Transverse colon (tissue), 4 donors: ENCODE measurements at regions of chr6 and their contacts with region 1.

Region 1: DNA sequence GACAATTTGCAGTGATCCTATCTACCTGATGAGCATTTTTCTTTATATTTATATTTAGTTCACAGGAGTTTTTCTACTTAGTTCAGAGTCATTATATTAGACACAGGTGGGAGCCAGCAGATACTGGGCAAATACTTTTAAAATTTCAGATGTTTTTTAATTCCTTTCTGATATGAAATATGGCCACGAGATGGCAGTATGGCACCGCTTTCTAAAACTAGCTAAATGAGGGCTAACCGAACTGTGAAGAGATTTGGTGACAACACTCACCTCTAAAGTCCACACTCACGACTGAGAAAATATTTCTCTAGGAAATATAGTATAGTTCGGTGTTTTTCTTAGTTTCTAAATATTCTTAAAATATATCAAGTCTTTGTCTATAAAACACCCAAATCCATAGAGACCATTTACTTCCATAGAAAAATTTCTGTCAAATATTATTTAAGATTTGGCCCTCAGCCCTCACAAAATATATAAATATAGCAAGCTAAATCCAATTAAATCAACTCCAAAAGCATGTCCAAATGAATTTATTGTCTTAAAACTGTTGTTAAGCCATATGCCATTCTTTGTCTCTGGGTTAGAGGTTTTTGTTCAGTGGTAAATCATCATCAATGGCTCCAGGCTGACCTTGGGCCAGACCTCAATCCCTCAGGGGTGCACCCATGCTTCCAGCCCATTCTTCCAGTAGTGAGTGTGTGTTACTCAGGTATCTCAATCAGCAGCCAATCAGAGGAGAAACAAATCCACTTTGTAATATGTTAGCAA is 63.6 kb downstream of the HUS1B start:
- DNase-seq: peak; percentile 57
- H3K4me3 ChIP-seq: no peak overlapping the region
- H3K27ac ChIP-seq: peak overlapping the region; percentile 13 to 64 (median 44)
- H3K4me1 ChIP-seq: peaks cover 0 to 3% (median 0%) of the 10 kb centered on the region in 4 donors
- H3K27me3 ChIP-seq: no peaks in the 10 kb centered on the region
- CTCF ChIP-seq: peak; percentile 68 to 81 (median 73)
- EP300 ChIP-seq: no peak
- POLR2A ChIP-seq: no peak

Region 2: DNA sequence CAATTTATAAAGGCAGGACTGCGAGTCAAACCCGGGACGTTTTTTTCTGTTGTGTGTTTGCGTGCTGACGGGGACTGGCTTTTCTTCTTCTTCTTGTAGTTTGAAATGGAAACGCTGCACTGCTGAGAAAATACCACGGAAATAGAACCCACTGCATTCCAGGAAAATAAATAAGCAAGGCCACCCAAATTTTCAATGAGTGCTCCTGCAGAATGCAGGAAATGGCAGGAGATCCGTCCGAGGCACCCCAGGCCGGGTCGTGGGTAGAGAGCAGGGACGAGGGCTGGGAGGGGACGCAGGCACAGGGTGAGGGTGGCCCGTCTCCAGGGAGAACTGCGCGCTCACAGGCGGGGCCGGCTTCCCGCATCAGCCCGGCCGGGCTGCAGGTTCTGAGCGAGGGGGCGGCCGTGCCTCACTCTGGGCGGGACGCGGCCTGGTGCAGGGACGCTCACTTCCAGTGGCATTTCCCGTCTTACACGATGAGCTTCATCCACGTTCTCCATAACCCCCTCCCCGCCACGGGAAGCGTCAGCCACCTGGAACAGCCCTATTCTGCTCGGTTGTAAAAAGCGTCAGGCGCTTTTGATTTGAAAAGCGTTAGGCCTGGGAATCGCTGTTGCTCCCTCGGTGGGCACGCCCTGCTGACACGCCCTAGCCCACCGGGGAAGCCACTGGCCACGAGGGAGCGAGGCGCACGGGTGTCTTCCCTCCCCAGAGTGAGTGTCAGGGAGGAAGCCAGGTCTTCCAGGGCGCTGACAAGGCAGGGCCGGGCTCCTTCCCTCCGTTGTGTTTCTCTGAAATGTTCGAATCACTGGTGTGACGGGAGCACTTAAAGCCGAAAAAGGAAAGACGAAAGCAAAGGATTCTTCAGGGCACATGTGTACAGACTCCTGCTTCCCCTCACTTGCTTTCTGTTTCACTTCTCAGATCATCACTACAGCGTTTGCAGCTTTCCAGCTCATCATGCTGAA is 117.6 kb after region 1 on chr6:
- in situ Hi-C with region 1: no loop called
- intact Hi-C with region 1: loop called (anchors 10 kb)
- DNase-seq: peak; percentile 60
- H3K4me3 ChIP-seq: peak overlapping the region; percentile 34 to 57 (median 43)
- H3K27ac ChIP-seq: peak overlapping the region; percentile 85 to 92 (median 90)
- H3K4me1 ChIP-seq: peaks cover 0 to 16% (median 2%) of the 10 kb centered on the region in 4 donors
- H3K27me3 ChIP-seq: peaks cover 31% of the 10 kb centered on the region
- CTCF ChIP-seq: no peak
- EP300 ChIP-seq: no peak
- POLR2A ChIP-seq: peak; percentile 59

Region 3: GRCh38 chr6:786946-787763 is 193.8 kb after region 1 on chr6:
- in situ Hi-C with region 1: loop called in 2 of 4 experiments (anchors 10 to 25 kb)
- intact Hi-C with region 1: loop called (anchors 10 kb)
- DNase-seq: no peak
- H3K4me3 ChIP-seq: no peak overlapping the region
- H3K27ac ChIP-seq: no peak overlapping the region
- H3K4me1 ChIP-seq: no peaks in the 10 kb centered on the region
- H3K27me3 ChIP-seq: peaks cover 15% of the 10 kb centered on the region
- CTCF ChIP-seq: peak; percentile 48 to 67 (median 59)
- EP300 ChIP-seq: no peak
- POLR2A ChIP-seq: no peak

Region 4: DNA sequence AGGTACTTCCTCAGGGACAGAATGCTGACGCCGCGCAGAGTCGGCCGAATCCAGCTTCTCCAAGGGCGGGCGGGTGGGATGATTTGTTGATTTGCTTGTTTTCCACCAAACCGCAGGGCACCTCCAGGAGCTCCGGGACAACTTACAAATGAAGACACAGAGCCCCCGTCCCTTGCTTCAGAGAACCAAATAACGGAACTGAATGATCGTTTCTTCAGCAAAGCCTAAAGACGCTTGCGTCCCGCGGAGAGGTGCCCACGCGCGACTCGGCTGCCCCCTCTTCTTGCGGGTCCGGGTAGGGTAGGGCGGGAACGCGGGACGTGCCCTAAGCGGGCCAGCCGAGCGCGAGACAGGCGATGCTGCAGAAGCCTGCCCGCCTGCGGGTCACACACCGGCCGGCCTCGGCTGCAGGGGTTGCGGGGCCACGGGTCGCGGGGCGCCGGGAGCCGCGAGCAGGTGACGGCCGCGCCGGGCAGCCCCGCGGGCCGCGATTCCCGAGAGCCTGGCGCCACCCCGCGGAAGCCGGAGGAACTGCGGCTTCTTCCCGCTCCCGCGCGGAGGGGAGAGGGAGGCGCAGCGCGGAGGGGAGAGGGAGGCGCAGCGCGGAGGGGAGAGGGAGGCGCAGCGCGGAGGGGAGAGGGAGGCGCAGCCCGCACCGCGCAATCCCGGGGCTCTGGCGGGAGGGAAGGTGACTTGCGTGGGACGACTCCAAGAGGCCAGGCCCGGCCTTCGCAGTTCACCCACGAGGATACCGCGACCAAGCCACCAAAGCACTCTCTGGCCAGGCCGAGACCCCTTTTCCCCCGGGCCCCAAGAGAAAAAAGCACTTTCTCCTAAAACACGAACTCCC is 788.4 kb after region 1 on chr6:
- in situ Hi-C with region 1: loop called in 1 of 4 experiments (anchors 10 kb)
- intact Hi-C with region 1: loop called (anchors 5 kb)
- DNase-seq: peak; percentile 49
- H3K4me3 ChIP-seq: peak overlapping the region in 3 of 4 donors; percentile 8 to 43 (median 31)
- H3K27ac ChIP-seq: peak overlapping the region; percentile 82 to 88 (median 86)
- H3K4me1 ChIP-seq: peaks cover 5 to 50% (median 33%) of the 10 kb centered on the region in 4 donors
- H3K27me3 ChIP-seq: peaks cover 100% of the 10 kb centered on the region
- CTCF ChIP-seq: peak; percentile 59 to 90 (median 83)
- EP300 ChIP-seq: no peak
- POLR2A ChIP-seq: no peak

Region 5: DNA sequence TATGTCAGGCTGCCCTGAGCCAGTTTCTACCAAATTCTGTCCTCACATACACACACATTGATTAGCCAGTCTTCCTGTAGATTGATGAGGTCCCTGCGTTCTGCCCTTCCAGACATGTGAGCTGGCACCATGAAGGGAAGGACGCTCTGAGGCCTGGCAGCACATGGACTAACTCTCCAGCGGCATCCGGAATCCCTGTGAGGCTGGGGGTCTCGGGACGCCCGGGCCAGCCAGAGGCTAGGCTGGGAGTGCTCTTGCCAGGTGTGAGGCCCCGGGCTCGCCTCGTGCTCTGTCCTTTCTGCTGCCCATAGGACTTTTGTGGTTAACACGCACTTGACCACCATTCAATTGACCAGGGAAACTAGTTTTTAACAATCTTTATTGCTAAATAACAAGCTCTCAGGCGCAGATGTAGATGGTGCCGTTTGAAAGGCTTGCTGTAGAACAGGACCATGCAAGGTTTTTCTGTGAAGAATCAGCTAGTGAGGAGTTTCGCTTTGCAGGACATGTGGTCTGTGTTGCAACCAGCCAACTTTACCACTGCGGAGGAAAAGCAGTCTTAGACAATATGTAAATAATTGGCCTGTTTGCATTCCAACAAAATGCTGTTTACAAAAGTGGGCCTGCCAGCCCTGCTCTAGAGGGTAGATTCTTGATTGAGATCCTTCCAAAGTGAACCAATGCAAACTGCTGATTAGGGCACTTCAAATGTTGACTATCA is 825.3 kb after region 1 on chr6:
- in situ Hi-C with region 1: loop called in 1 of 4 experiments (anchors 10 kb)
- intact Hi-C with region 1: no loop called
- DNase-seq: no peak
- H3K4me3 ChIP-seq: no peak overlapping the region
- H3K27ac ChIP-seq: no peak overlapping the region
- H3K4me1 ChIP-seq: no peaks in the 10 kb centered on the region
- H3K27me3 ChIP-seq: peaks cover 5% of the 10 kb centered on the region
- CTCF ChIP-seq: no peak
- EP300 ChIP-seq: no peak
- POLR2A ChIP-seq: no peak